Transverse colon (tissue), 4 donors: ENCODE measurements at regions of chr1 and their contacts with region 1.

Region 1: GRCh38 chr1:226691247-226691646 is 47.8 kb downstream of the ITPKB start:
- DNase-seq: no peak
- H3K4me3 ChIP-seq: no peak overlapping the region
- H3K27ac ChIP-seq: peak overlapping the region; percentile 71 to 80 (median 77)
- H3K4me1 ChIP-seq: peaks cover 36 to 72% (median 51%) of the 10 kb centered on the region in 4 donors
- H3K27me3 ChIP-seq: no peaks in the 10 kb centered on the region
- CTCF ChIP-seq: no peak
- EP300 ChIP-seq: no peak
- POLR2A ChIP-seq: no peak

Region 2: DNA sequence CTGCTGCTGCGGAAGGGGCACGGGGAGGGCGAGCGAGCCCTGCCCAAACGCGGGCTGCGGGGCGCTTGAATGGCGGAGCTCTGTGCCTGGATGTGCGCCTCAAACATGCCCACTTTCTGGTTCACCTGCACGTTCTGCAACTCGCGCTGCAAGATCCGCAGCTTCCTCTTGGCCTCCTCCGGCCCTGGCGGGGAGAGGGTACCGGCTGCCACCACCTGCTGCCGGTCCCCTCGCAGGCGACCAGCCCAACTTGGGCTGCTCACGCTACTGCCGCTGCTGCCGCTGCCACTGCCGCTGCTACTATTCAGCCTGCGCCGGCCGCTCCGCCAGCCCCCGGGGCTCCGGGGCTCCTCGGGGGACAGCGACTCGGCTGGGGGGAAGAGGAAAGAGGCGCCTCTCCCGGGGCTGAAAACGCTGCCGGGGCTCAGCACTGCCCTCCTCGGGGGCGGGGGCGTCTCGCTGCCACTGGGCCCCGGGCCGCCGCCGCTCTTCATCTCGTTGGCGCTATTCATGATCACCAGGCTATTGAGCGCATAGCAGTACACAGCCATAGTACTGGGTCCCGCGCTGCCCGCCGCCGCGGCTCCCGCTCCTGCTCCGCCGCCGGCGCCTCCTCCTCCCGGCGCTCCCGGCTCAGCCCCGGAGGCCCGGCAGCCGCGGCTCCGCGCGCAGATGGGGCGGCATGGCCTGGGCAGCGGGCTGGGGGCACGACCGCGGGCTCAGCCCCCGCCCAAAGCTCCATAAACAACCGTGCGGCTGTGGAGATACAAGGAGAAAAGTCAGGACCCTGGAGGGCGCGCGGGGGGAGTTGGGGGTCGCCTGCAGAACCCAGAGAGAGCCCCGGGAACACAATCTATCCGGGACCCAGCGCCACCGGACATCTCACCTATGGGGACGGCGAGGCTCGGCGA is 45.9 kb after region 1 on chr1:
- in situ Hi-C with region 1: no loop called
- intact Hi-C with region 1: loop called (anchors 5 kb)
- DNase-seq: peak; percentile 39
- H3K4me3 ChIP-seq: peak overlapping the region; percentile 66 to 96 (median 82)
- H3K27ac ChIP-seq: peak overlapping the region; percentile 90 to 97 (median 94)
- H3K4me1 ChIP-seq: peaks cover 10 to 51% (median 32%) of the 10 kb centered on the region in 4 donors
- H3K27me3 ChIP-seq: no peaks in the 10 kb centered on the region
- CTCF ChIP-seq: peak in 1 of 5 experiments; percentile 7
- EP300 ChIP-seq: no peak
- POLR2A ChIP-seq: no peak